Cardiac septum (tissue), 1 donor: ENCODE measurements at regions of chr22 and their contacts with region 1.

Region 1: DNA sequence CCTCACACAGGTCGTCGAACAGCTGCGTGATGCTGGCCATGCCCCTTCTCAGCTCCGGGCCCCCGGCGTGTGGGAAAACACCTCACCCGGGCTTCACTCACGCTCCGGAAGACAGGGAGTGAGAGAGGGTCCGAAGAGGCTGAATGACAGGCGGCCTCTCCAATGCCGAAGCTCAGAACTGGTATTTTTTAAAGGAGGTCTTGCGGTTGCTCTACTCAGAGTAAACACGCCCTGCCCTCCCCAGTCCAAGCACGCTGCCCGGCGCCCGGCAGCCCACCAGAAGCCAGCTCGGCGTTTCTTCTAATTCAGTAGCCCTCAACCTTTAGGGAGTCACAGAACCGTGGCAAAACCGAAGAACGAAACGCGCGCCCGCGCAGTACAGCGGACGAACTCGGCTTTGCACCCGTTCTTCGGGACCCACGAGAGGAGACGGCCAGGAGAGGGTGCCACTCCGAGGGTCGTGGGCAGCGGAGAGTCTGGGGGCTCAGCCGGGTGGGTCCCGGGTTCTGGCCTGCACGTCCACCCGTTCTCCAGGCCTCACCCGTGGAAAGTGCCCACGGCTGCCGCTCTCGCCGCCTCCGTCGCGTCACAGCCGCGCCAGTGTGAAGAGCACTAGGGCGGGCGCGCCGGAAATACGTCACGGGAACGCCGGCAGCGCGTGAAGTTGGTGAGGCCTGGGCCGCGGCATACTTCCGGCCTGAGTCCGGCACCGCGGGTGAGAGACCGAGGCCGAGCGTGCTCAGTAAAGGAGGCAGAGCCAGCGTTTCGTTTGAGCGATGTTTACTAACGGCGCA is at the start of gene TUBGCP6:
- DNase-seq: peak; percentile 98
- total RNA-seq, gene TUBGCP6: 22.8 TPM

Region 2: DNA sequence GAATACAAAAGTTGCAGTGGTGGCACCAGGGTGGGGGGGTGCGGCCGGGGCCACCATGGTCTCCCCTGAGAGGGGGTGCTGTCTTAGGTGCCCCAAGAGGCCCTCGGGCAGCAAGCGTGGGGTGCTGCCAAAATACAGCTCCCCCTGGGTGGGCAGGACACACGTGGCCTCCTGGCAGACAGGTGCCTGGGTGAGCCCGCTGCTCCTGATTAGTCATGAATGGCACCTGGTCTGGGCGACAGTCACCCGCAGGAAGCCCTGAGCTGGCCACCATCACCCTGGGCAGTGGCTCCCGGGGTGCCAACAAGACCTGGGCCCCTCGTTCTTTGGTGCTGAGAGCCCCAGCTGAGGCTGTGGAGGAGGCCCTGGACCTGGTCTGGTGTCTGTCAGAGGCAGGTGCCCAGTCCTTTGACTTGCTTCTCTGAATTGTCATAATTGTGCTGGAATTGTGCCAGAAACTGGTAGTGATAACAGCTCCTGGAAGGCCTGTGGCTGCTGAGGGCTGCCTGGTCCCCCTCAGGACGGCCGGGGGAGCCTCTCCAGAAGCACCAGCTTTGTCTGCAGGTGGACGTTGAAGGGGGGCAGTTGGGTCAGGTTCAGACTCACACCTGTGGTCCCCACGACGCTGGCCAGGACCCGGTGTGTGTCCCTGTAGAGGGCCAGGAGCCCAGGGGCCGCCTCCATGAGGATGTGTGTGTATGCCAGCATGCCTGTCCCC is 341.1 kb before region 1 on chr22:
- intact Hi-C with region 1: no loop called
- DNase-seq: no peak

Region 3: DNA sequence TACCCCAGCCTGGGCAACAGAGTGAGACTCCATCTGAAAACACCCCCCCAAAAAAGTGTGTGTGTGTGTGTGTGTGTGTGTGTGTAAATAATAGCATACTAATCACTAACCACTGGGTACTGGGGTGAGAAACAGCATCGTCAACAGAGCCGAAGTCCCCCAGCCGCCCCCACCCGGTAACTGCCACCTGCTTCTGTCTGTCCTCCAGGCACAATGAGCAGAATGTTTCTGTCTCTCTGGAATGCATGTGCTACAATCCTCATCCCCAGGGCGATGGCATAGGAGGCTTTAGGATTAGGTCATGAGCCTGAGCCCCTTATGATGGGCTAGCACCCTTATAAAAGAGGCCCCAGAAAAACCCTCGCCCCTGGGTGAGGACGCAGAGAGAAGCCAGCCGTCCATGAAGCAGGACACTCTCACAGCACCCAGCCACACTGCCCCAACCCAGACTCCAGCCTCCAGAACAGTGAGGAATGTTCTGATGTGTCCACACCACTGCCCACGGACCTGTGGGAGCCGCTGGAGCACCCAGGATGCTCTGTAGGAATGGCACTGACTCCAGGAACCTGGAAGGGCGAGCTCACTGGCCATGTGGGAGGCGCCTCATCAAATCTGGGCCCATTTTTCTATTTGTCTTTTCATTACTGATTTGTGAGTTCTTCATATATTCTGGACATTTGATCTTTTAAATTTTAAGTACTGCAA is 196.4 kb before region 1 on chr22:
- intact Hi-C with region 1: no loop called
- DNase-seq: no peak

Region 4: DNA sequence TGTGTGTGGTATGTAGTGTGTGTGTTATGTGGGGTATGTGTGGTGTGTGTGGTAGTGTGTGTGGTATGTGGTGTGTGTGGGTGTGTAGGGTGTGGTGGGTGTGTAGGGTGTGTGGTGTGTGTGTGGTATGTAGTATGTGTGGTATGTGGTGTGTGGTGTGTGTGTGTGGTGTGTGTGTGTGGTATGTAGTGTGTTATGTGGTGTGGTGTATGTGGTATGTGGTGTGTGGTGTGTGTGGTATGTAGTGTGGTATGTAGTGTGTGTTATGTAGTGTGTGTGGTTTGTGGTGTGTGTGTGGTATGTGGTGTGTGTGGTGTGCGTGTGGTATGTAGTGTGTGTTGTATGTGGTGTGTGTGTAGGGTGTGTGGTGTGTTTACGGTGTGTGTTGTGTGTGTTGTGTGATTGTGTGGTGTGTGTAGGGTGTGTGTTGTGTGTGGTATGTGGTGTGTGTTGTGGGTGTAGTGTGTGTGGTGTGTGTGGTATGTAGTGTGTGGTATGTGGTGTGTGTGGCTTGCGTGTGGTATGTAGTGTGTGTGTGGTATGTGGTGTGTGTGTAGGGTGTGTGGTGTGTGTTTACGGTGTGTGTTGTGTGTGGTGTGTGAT is 94.3 kb after region 1 on chr22:
- intact Hi-C with region 1: no loop called
- DNase-seq: no peak

Region 5: DNA sequence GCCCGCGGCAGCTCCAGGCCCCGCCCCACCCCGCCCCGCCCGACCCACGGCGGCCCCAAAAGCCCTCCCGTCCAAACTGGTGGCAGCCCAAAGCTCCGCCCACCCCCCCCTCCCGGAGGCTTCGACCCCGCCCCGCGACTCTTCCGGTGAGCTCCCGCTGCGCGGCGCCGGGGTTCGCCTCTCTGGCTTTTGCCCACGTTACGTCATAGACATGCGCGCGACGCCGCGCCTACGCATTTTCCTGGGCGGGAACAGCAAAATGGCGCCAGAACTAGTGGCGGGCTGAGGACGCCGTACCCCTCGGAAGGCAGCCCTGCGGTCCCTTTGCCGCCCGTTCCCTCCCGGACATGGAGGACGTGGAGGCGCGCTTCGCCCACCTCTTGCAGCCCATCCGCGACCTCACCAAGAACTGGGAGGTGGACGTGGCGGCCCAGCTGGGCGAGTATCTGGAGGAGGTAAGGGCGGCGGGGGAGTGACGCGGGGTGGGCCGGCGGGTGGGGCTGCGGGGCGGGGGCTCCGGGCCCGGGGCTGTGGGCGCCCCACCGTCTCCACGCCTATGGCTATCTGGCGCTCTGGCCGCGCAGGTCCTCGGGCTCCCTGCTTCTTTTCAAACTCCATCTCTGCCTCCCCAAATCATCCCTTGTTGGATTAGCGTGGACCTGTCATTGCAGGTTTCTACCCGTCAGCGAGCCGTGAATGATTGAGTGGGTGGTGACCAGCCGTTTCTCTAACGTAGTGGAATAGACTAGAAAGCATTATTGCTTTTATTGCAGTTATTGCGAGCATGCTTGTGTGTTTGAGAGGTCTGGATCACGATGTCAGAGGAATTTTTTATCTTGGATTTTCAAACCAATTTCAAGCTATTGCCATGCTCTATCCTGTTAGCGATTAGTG is 263.6 kb after region 1 on chr22 and contains the start of gene NCAPH2:
- intact Hi-C with region 1: loop called (anchors 10 kb)
- DNase-seq: peak; percentile 98
- total RNA-seq, gene NCAPH2: 25.1 TPM

Region 6: GRCh38 chr22:50531962-50532674 is 287.5 kb after region 1 on chr22:
- intact Hi-C with region 1: no loop called
- DNase-seq: peak; percentile 91